Gastrocnemius medialis (tissue), 4 donors: ENCODE measurements at regions of chr15 and their contacts with region 1.

Region 1: GRCh38 chr15:66188464-66188863 is 65.1 kb downstream of the MEGF11 start:
- DNase-seq: no peak
- ATAC-seq: no peak
- H3K4me3 ChIP-seq: no peak overlapping the region
- H3K27ac ChIP-seq: no peak overlapping the region
- H3K4me1 ChIP-seq: no peaks in the 10 kb centered on the region
- H3K27me3 ChIP-seq: peaks cover 0 to 14% (median 0%) of the 10 kb centered on the region in 3 donors
- CTCF ChIP-seq: no peak
- POLR2A ChIP-seq: no peak

Region 2: GRCh38 chr15:65916664-65917406 is 271.6 kb before region 1 on chr15:
- in situ Hi-C with region 1: no loop called
- intact Hi-C with region 1: loop called (anchors 5 kb)
- DNase-seq: no peak
- ATAC-seq: peak; percentile 25 to 71
- H3K4me3 ChIP-seq: no peak overlapping the region
- H3K27ac ChIP-seq: no peak overlapping the region
- H3K4me1 ChIP-seq: peaks cover 0 to 2% of the 10 kb centered on the region in 2 donors
- H3K27me3 ChIP-seq: no peaks in the 10 kb centered on the region
- CTCF ChIP-seq: peak in 3 of 5 experiments; percentile 33 to 45 (median 38)
- POLR2A ChIP-seq: no peak

Region 3: DNA sequence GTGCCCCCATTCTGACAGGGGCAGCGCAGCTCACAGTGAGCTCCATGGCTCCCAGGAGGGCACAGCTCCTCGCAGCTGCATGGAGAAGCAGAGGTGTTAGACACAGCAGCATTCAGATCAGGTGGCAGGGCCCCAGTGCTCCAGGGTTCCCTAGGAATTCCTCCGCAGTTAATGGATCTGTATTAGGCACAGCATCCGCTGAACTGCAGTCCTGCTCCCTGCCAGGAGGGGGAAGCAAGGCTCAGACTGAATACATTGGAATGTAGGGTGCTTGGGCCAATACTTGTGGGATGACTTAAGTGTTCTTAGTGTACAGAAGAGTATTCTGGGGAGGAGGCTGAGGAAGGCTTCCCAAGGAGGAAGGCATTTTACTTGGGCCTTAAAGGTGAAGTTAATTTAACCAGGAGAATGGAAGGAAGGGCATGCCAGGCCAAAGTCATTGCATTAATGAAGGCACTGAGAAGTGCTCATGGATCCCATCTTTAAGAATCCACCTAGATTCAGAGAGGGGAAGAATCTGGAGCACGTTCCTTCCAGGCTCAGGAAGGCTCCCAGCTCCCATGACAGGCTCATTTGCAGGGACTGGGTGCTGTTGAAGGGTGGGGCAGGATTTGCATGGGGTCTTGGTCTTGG is 207.5 kb before region 1 on chr15:
- in situ Hi-C with region 1: loop called in 1 of 4 experiments (anchors 25 kb)
- intact Hi-C with region 1: no loop called
- DNase-seq: peak in 1 of 2 donors; percentile 11
- ATAC-seq: peak; percentile 53 to 59
- H3K4me3 ChIP-seq: no peak overlapping the region
- H3K27ac ChIP-seq: no peak overlapping the region
- H3K4me1 ChIP-seq: no peaks in the 10 kb centered on the region
- H3K27me3 ChIP-seq: peaks cover 27 to 33% (median 27%) of the 10 kb centered on the region in 3 donors
- CTCF ChIP-seq: peak in 3 of 5 experiments; percentile 42 to 56 (median 51)
- POLR2A ChIP-seq: no peak

Region 4: DNA sequence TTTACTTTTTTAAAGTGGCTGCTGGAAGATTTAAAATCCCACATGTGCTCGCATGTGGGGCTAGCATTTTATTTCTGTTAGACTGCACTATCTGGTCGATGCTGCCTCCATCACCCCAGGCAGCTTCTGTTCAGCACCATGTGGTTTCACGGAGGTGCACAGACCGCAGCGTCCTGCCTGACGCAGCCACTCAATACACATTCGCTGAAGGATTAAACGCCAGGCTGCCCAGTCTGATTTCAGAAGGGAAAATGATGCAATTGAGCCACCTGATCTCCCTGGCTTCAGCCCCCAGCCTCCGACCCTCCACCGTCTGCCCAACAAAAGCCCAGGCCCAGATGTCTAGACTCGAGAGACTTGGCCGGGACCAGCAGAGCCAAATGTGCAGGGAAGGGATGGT is 19.4 kb before region 1 on chr15:
- in situ Hi-C with region 1: no loop called
- intact Hi-C with region 1: no loop called
- DNase-seq: no peak
- ATAC-seq: no peak
- H3K4me3 ChIP-seq: no peak overlapping the region
- H3K27ac ChIP-seq: no peak overlapping the region
- H3K4me1 ChIP-seq: no peaks in the 10 kb centered on the region
- H3K27me3 ChIP-seq: peaks cover 0 to 2% (median 0%) of the 10 kb centered on the region in 3 donors
- CTCF ChIP-seq: no peak
- POLR2A ChIP-seq: no peak